ENCODE measurements at regions of chr10 and their contacts with region 1.

Region 1: GRCh38 chr10:70528726-70529362 is 50.3 kb downstream of the PALD1 start:
- DNase-seq: peak; percentile 69 to 81 (median 75)
- ATAC-seq: peak; percentile 97
- H3K4me3 ChIP-seq: no peak overlapping the region
- H3K27ac ChIP-seq: no peak overlapping the region
- H3K4me1 ChIP-seq: peaks cover 6 to 11% of the 10 kb centered on the region in 2 experiments; a peak in 2 of 5 replicates
- H3K27me3 ChIP-seq: peaks cover 2 to 38% of the 10 kb centered on the region in 2 experiments; a peak in 3 of 5 replicates
- CTCF ChIP-seq: no peak
- EP300 ChIP-seq: no peak
- POLR2A ChIP-seq: no peak
- RAD21 ChIP-seq: no peak

Region 2: DNA sequence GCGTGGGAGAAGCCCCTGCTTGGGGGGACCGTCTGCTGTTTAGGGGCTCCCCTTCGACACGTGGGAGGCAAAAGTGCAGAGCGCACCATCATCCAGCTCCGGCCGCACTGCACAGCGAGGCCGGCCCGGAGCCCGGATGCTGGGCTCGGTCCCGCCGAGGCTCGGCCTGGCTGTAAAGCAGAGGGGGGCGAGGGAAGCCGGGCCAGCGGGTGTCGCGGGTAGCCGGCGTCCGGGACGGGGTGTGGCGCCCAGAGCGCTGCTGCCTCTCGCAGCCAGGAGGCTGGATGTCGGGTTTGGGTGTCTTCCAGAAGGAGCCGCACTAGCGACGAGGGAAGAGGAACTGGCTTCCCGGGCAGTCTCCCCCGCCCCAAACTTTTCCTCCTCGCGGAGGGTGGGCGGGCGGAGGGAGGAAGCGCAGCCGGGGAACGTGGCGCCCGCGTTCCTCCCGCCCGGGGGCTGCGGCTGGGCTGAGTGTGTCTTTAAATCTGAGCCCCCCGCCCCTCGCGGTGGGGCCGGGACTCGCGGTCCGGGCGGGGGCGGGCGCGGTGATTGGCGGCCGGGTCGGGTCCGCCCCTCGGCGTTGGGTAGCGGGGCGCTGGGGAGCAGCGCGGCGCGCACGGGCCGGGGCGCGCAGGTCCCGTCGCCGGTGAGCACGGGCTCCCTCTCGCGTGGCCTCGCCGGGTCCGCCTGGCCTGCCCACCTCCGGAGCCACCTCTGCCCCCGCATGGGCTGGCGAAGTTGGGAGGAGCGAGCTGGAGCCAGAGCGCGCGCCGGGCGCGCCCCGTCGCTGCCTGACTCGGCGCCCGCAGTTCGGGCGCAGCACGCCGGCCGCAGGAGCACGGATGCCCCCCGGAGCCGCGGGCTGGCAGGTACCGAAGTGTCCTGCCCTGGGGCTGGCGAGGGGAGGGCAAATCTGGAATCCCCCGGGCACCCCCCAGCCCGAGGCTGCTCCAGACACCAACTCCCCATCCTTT is 50.4 kb before region 1 on chr10 and contains the start of gene PALD1:
- CTCF ChIA-PET with region 1: no interaction called
- POLR2A ChIA-PET with region 1: no interaction called
- in situ Hi-C with region 1: no loop called
- intact Hi-C with region 1: loop called (anchors 5 kb)
- DNase-seq: peak; percentile 41 to 87 (median 72)
- ATAC-seq: peak; percentile 28
- H3K4me3 ChIP-seq: peak within 1 kb of the TSS; percentile 31
- H3K27ac ChIP-seq: no peak within 1 kb of the TSS
- H3K4me1 ChIP-seq: peaks cover 0 to 18% of the 10 kb centered on the region in 2 experiments; a peak in 4 of 5 replicates
- H3K27me3 ChIP-seq: peaks cover 68 to 96% of the 10 kb centered on the region in 2 experiments
- CTCF ChIP-seq: peak in 1 of 3 experiments; percentile 25; a peak in 2 of 6 replicates
- EP300 ChIP-seq: no peak
- POLR2A ChIP-seq: no peak
- RAD21 ChIP-seq: no peak
- polyA plus RNA-seq, gene PALD1: not detected

Region 3: DNA sequence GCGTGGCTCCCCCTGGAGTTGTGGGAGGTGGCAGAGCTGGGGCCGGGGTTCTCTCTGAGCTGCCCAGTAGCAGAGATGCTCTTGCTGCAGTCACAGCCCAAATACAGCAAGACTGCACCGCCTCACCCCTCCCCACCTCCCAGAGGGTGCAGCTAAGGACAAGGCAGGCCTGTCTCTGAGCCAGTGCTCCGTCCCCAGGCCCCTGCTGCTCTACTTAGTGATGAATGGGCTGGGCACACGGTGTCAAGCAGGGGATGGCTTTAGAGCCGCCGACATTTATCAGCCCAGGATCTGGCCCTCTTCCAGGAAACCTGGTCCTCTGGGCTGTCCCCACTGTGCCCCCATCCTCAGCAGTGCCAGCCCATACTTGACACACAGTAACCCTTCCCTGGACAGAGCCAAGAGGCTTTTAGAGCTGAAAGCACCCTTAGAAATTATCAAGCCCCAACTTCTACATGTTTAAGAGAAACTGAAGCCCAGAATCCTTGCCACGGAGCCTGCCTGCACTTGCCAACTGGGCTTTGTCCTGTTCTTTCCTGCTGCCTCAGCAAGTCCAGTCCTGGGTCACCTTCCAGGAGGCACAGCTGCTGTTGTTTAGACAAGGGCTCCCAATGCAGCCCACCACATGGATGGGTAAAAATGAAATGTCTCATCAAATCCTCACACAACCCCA is 546.4 kb after region 1 on chr10:
- CTCF ChIA-PET with region 1: no interaction called
- POLR2A ChIA-PET with region 1: no interaction called
- in situ Hi-C with region 1: no loop called
- intact Hi-C with region 1: no loop called
- DNase-seq: no peak
- ATAC-seq: no peak
- H3K4me3 ChIP-seq: no peak overlapping the region
- H3K27ac ChIP-seq: no peak overlapping the region
- H3K4me1 ChIP-seq: no peaks in the 10 kb centered on the region
- H3K27me3 ChIP-seq: peaks cover 35 to 91% of the 10 kb centered on the region in 2 experiments
- CTCF ChIP-seq: no peak
- EP300 ChIP-seq: no peak
- POLR2A ChIP-seq: no peak
- RAD21 ChIP-seq: no peak

Measured in K562 (cell line).